ENCODE measurements at regions of chr19 and their contacts with region 1.

Region 1: DNA sequence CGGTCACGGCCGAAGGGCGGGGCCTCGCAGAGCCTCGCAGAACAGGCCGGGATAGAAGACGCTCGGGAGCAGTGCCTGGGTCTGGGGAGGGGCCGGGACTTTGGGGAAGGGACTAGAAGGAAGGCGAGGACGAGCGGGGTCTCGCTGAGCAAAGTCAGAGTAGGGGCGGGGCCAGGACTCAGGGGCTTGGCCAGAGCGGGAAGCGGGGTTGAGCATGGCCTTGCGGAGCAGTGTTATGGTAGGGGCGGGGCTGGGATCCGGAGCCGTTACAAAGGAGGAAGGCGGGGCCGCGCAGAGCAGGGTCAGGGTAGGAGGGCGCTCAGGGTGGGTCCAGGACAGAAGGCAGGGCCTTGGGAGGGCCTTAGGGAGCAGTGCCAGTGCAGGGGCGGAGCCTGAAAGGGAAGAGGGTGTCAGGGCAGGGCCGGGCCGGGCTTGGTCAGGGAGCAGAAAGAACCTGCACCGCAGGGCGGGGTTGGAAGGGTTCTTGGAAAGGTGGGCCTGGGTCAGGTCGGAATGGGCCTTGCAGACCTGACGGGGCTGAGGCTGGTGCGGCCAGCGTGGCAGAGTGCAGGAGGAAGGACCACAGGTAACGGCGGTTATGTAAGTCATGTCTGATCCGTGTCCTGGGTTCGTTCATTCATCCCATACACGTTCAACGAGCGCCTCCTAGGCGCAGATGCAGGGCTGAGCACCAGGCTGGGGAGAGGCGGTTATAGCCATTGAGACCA is 557 bp upstream of the ATP8B3 start:
- DNase-seq: peak; percentile 92
- H3K4me3 Mint-ChIP-seq: peak overlapping the region; percentile 93
- H3K27ac Mint-ChIP-seq: peak overlapping the region; percentile 97
- H3K4me1 Mint-ChIP-seq: peaks cover 18% of the 10 kb centered on the region
- H3K27me3 Mint-ChIP-seq: no peaks in the 10 kb centered on the region

Region 2: GRCh38 chr19:1568320-1569019 is 244.2 kb before region 1 on chr19 and contains the start of gene MEX3D:
- intact Hi-C with region 1: loop called (anchors 1 kb)
- DNase-seq: peak; percentile 67
- H3K4me3 Mint-ChIP-seq: peak within 1 kb of the TSS; percentile 56
- H3K27ac Mint-ChIP-seq: peak within 1 kb of the TSS; percentile 23
- H3K4me1 Mint-ChIP-seq: no peaks in the 10 kb centered on the region
- H3K27me3 Mint-ChIP-seq: peaks cover 18% of the 10 kb centered on the region
- total RNA-seq, gene MEX3D: 14.6 and 15.0 TPM in 2 replicates

Region 3: GRCh38 chr19:1825909-1826556 is 13.4 kb after region 1 on chr19:
- intact Hi-C with region 1: loop called (anchors 1 kb)
- DNase-seq: peak; percentile 65
- H3K4me3 Mint-ChIP-seq: no peak overlapping the region
- H3K27ac Mint-ChIP-seq: no peak overlapping the region
- H3K4me1 Mint-ChIP-seq: no peaks in the 10 kb centered on the region
- H3K27me3 Mint-ChIP-seq: no peaks in the 10 kb centered on the region

Region 4: DNA sequence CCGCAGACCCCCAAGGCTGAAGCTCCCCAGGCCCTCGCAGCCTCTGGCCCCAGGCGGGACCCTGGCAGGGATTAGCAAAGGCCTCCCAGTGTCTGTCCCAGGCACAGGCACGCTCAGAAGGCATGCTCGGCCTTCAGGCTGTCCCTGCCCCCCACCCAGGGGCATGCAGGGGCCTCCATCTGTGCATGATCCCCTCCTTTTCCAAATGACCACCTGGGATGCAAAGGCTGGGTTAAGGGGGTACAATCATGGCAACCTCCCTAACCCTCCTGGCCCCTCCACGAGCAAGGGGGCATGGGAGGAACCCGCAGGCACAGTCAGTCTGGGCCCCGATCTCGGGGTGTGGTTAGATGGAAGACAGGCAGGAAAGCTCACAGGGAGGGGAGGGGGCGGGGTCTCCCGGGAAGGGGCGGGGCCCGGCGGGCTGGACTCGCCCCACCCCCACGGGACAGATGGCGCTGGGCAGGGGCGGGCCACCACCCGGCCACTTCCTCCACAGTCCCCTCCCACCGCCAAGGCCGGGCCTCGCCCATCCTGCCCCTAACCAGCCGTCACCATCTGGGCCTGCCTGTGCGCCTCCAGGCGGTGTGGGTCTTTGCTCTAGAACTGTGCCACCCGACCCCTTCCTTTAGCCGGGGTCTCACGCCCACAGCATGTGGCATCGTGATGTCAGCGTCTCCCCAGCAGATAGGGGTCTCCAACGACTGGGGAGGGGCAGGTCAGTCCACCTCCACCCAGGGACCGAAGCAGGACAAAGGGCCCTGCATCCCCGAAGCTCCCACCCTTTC is 42.6 kb after region 1 on chr19:
- intact Hi-C with region 1: loop called (anchors 1 kb)
- DNase-seq: peak; percentile 87
- H3K4me3 Mint-ChIP-seq: peak overlapping the region; percentile 80
- H3K27ac Mint-ChIP-seq: peak overlapping the region; percentile 86
- H3K4me1 Mint-ChIP-seq: peaks cover 27% of the 10 kb centered on the region
- H3K27me3 Mint-ChIP-seq: no peaks in the 10 kb centered on the region